AG04449 (cell line): ENCODE measurements at regions of chr4 and their contacts with region 1.

Region 1: DNA sequence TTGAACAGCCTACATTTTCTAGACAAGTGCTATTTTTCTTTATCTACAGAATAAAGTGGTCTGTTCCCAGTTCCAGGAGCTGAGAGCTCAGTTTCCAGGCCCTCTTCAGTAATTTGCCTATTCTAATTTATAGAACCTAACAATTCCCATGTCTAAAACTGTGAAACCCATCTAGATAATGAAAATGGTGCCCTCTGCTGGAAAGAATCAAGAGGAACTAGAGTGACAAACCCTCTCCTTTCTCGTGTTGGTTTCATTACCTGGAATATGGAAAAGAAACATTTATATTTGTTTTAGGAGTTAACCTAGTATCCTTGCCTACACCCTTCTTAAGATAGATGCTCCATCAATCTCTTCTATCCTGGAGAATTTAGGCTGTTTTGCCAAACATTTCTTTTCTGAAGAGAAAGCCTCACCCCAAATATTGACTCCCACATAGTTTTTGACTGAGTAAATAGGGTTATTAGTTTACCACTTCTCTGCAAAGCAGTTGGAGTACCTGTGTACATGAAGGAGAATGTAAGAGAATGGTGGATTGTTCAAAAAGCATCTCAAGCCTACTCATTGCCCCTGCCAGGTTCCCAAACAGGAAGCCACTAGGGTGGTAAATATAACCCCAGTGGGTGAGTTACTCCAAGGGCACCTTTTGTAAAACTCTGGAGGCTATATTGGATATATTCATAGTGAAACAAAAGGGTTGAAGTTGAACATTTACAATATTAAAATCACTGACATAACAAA is 121.6 kb downstream of the RASL11B start:
- DNase-seq: no peak
- H3K4me3 ChIP-seq: no peak overlapping the region
- CTCF ChIP-seq: peak; percentile 56

Region 2: DNA sequence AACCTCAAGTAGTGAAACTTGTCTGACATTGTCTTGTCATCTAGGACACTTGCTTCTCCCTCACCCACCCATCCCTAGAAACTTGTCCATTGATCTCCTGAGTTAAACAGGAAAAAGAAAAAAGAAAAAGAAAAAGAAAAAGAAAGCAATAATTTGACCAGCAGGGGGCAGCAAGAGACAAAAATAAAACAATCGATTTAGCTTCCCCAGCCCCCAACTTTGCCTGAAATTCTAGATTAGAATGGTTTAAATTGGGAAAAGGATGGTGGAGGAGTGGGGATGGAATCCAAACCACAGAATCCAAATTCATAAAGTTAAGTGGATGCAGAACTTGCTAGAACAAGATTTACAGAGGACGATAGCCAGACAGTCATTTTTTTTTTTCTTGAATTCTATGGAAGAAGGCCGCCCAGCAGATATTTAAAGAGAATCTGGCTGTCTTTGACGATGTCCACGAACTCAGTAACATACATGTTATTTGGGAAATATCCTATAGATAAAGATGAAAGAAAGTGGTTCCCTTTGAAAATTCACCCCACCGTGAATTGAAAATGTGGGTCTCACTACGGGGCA is 607.5 kb before region 1 on chr4:
- CTCF ChIA-PET with region 1: interaction called, 79 read pairs
- POLR2A ChIA-PET with region 1: no interaction called
- DNase-seq: peak; percentile 9
- H3K4me3 ChIP-seq: no peak overlapping the region
- CTCF ChIP-seq: peak; percentile 15

Region 3: DNA sequence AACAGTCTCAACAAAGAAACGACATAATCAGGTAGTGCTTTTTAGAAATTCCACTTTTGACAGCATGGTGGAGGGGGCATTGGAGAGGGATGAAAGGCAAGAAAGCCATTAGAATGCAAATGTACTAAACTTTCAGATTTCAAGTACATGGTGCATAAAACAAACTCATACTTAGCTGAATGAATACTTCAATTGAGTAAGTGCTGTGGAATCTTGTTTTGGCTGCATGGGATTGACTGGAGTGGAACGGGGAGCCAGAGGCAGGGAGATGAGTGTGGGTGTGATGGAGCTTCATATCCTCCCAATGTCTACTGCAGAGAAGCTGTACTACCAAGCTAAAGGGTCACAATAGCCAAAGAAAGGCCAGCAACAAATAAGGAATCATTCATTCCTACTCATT is 377.0 kb before region 1 on chr4:
- CTCF ChIA-PET with region 1: interaction called, 11 read pairs
- POLR2A ChIA-PET with region 1: no interaction called
- DNase-seq: peak; percentile 38
- H3K4me3 ChIP-seq: no peak overlapping the region
- CTCF ChIP-seq: no peak

Region 4: DNA sequence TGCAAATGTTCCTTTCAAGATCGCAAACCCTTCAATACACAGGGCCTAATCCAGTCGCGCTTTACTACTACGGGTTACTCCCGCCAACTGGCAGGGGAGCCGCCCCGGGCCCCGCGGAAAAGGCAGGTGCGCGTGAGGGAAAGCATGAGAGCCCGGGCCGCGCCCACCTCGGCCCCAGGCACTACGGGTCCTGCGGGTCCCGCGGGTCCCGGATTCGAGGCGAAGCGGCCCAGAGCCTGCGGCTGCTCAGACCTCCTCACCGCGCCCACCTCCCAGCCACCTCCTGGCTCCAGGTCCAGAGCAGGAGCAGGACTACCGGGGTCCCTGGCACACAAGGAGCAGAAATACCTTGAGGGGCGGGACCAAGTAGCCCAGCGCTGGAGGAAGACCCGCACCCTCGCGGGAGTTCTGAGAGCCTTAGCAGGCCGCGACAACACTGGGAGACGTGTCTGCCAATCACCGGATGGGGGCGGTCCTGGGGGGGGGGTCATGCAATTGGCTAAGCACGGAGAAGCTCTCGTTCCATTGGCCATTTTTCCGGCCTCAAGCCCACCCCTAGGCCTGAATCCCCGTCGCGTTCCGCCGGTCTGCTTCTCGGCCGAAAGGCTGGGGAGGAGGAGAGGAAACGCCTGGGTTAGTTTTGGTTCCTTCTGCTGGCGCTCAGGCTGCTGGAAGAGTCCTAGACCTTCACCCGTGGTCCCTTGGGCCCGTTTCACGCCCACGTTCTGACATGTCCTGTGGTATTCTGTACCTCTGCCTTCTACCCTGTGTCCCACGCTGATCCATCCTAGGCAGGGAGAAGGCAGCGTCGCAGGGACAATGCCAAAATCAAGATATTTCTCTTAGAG is 261.5 kb before region 1 on chr4:
- CTCF ChIA-PET with region 1: interaction called, 14 read pairs
- POLR2A ChIA-PET with region 1: interaction called, 4 read pairs
- DNase-seq: peak; percentile 85
- H3K4me3 ChIP-seq: peak overlapping the region; percentile 88
- CTCF ChIP-seq: no peak

Region 5: GRCh38 chr4:52996261-52996892 is 12.6 kb after region 1 on chr4:
- CTCF ChIA-PET with region 1: interaction called, 13 read pairs
- POLR2A ChIA-PET with region 1: no interaction called
- DNase-seq: no peak
- H3K4me3 ChIP-seq: no peak overlapping the region
- CTCF ChIP-seq: no peak

Region 6: DNA sequence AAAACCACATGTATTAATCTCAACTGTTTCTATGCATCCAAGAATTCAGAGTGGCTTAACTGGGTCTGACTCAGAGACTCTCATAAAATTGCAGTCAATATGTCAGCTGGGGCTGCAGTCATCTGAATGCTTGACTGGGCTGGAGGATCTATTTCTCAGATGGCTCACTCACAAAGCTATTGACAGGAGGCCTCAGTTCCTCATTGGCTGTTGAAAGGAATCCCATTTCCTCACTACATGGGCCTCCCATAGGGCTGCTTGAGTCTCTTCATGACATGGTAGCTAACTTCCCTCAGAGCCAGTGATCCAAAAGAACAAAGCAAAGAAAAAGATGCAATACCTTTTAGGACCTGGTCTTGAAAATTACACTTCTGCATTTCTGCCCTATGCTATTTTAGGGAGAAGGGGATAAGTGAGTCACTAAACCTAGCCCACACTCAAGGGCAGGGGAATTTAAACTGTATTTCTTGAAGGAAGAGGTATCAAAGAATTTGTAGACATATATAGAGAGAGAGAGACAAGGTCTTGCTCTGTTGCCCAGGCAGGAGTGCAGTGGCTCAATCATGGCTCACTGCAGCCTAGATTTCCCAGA is 372.3 kb after region 1 on chr4:
- CTCF ChIA-PET with region 1: no interaction called
- POLR2A ChIA-PET with region 1: no interaction called
- DNase-seq: no peak
- H3K4me3 ChIP-seq: no peak overlapping the region
- CTCF ChIP-seq: no peak